ENCODE measurements at regions of chr5 and their contacts with region 1.

Region 1: GRCh38 chr5:38845526-38846378 is at the start of gene OSMR:
- DNase-seq: peak; percentile 84
- ATAC-seq: peak; percentile 89
- H3K4me3 ChIP-seq: peak within 1 kb of the TSS; percentile 98 to 99 (median 98)
- H3K27ac ChIP-seq: peak within 1 kb of the TSS; percentile 95
- H3K4me1 ChIP-seq: peaks cover 55% of the 10 kb centered on the region
- H3K27me3 ChIP-seq: no peaks in the 10 kb centered on the region; a peak in 1 of 5 replicates
- CTCF ChIP-seq: peak; percentile 5; the same call in 1 of the 2 replicates
- EP300 ChIP-seq: peak in 1 of 2 experiments; percentile 55; a peak in 2 of 4 replicates
- POLR2A ChIP-seq: peak; percentile 50 to 71
- RAD21 ChIP-seq: no peak
- total RNA-seq, gene OSMR: 14.2 and 21.3 TPM in 2 replicates

Region 2: DNA sequence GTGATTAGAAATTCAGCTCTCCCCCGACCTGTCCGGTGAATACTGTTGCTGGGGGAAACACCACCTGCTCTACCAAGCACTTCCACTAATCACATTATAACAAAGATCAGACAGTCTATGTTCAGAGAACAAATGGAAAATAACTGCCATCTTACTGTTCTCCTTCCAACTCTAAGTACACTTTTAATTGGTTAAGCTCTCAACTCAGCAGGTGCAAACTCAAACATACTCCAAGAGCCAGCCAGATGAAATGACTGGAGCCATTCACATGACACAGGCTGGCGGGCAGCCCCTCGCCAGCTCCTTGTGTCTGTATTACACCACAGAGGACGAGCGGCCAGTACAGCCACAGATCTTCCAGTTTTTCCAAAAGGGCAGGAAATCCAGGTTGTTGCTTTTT is 305.4 kb before region 1 on chr5:
- CTCF ChIA-PET with region 1: no interaction called
- POLR2A ChIA-PET with region 1: no interaction called
- in situ Hi-C with region 1: no loop called
- intact Hi-C with region 1: loop called (anchors 10 kb)
- DNase-seq: no peak
- ATAC-seq: no peak
- H3K4me3 ChIP-seq: no peak overlapping the region
- H3K27ac ChIP-seq: no peak overlapping the region
- H3K4me1 ChIP-seq: peaks cover 84% of the 10 kb centered on the region
- H3K27me3 ChIP-seq: no peaks in the 10 kb centered on the region
- CTCF ChIP-seq: no peak
- EP300 ChIP-seq: no peak
- POLR2A ChIP-seq: no peak
- RAD21 ChIP-seq: no peak

Region 3: GRCh38 chr5:38745836-38746732 is 99.7 kb before region 1 on chr5:
- CTCF ChIA-PET with region 1: no interaction called
- POLR2A ChIA-PET with region 1: no interaction called
- in situ Hi-C with region 1: no loop called
- intact Hi-C with region 1: no loop called
- DNase-seq: no peak
- ATAC-seq: no peak
- H3K4me3 ChIP-seq: no peak overlapping the region
- H3K27ac ChIP-seq: no peak overlapping the region
- H3K4me1 ChIP-seq: no peaks in the 10 kb centered on the region
- H3K27me3 ChIP-seq: peaks cover 0 to 24% of the 10 kb centered on the region in 2 experiments; a peak in 3 of 5 replicates
- CTCF ChIP-seq: no peak
- EP300 ChIP-seq: no peak
- POLR2A ChIP-seq: no peak
- RAD21 ChIP-seq: no peak

Region 4: DNA sequence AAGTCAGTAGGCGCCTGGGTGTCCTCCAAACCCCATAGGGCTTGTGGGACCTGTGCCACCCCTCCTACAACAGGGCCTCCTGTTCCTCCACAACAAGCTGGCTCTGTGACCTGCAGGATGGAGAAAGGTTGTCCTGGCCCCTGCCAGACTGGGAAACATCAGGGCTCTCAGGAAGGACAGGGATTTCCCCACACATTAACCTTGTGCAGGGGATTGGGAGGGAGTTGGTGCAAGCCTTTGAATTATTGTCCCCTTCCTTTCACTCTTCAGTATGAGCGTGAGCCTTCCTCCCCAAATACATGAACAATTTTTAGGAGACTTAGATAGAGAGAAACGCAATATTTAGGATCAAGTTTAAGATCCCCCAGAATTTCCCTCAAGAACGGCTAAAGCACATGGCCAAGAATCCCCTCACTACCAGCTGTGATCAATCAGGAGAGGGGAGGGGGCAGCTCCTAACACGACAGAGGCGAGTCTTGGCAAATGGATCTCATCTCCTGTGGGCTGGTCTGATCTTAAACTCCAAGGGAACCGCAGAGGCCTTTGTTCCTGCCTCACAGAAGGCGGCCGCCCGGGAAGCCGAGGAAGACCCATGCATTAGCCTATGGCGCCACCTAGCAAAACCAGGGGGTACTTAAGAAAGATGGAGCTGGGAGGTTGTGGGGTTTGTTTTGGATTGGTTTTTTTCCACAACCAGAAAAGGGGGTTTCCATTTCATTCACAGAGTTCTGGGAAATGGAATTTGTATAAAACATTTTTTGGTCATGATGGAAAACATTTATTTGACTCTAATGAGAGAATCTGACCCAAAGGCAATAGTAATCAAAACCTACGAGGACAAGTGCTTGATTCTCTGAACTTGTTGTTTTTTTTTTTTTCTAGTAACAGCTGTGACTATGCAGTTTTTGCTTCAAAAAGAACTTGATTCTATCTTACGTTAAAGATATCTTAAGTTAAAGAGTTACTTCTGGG is 36.1 kb before region 1 on chr5:
- CTCF ChIA-PET with region 1: no interaction called
- POLR2A ChIA-PET with region 1: no interaction called
- in situ Hi-C with region 1: no loop called
- intact Hi-C with region 1: no loop called
- DNase-seq: peak; percentile 68
- ATAC-seq: peak; percentile 98
- H3K4me3 ChIP-seq: no peak overlapping the region
- H3K27ac ChIP-seq: no peak overlapping the region
- H3K4me1 ChIP-seq: peaks cover 13% of the 10 kb centered on the region
- H3K27me3 ChIP-seq: no peaks in the 10 kb centered on the region
- CTCF ChIP-seq: peak; percentile 88
- EP300 ChIP-seq: no peak
- POLR2A ChIP-seq: no peak
- RAD21 ChIP-seq: peak; percentile 82

Region 5: GRCh38 chr5:38831909-38832308 is 13.8 kb before region 1 on chr5:
- CTCF ChIA-PET with region 1: no interaction called
- POLR2A ChIA-PET with region 1: interaction called, 13 read pairs
- in situ Hi-C with region 1: no loop called
- intact Hi-C with region 1: loop called (anchors 1 kb)
- DNase-seq: peak; percentile 14
- ATAC-seq: peak; percentile 7; the same call in 2 of the 3 replicates
- H3K4me3 ChIP-seq: no peak overlapping the region
- H3K27ac ChIP-seq: peak overlapping the region; percentile 30
- H3K4me1 ChIP-seq: peaks cover 39% of the 10 kb centered on the region
- H3K27me3 ChIP-seq: no peaks in the 10 kb centered on the region
- CTCF ChIP-seq: peak; percentile 47
- EP300 ChIP-seq: no peak
- POLR2A ChIP-seq: no peak
- RAD21 ChIP-seq: no peak

Region 6: GRCh38 chr5:38922199-38922598 is 76.4 kb after region 1 on chr5:
- CTCF ChIA-PET with region 1: no interaction called
- POLR2A ChIA-PET with region 1: interaction called, 3 read pairs
- in situ Hi-C with region 1: no loop called
- intact Hi-C with region 1: loop called (anchors 5 kb)
- DNase-seq: peak; percentile 29
- ATAC-seq: peak; percentile 92
- H3K4me3 ChIP-seq: no peak overlapping the region
- H3K27ac ChIP-seq: no peak overlapping the region
- H3K4me1 ChIP-seq: peaks cover 8% of the 10 kb centered on the region
- H3K27me3 ChIP-seq: no peaks in the 10 kb centered on the region
- CTCF ChIP-seq: peak; percentile 80
- EP300 ChIP-seq: no peak
- POLR2A ChIP-seq: no peak
- RAD21 ChIP-seq: peak; percentile 47; the same call in 1 of the 2 replicates

Region 7: DNA sequence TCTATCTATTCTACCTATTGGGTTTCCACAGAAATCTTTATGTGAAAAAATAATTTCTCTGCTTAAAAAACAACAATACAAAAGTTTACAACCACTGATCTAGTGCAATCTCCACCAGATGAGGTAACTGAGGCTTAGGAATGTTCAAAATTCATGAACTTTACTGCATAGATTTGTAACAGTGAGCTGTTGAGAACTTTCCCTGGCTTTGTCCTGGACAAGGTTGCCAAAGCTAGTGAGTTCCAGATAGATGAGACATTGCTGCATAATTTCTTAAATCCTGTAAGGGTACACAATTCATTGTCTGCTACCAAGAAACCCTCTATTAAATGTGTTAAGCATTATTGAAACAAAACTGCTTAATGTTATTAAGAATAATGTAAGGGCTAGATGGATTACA is 102.7 kb after region 1 on chr5:
- CTCF ChIA-PET with region 1: no interaction called
- POLR2A ChIA-PET with region 1: no interaction called
- in situ Hi-C with region 1: no loop called
- intact Hi-C with region 1: no loop called
- DNase-seq: no peak
- ATAC-seq: no peak
- H3K4me3 ChIP-seq: no peak overlapping the region
- H3K27ac ChIP-seq: no peak overlapping the region
- H3K4me1 ChIP-seq: no peaks in the 10 kb centered on the region
- H3K27me3 ChIP-seq: no peaks in the 10 kb centered on the region
- CTCF ChIP-seq: no peak
- EP300 ChIP-seq: no peak
- POLR2A ChIP-seq: no peak
- RAD21 ChIP-seq: no peak

Region 8: GRCh38 chr5:39005566-39006232 is 159.9 kb after region 1 on chr5:
- CTCF ChIA-PET with region 1: no interaction called
- POLR2A ChIA-PET with region 1: no interaction called
- in situ Hi-C with region 1: no loop called
- intact Hi-C with region 1: no loop called
- DNase-seq: peak; percentile 12
- ATAC-seq: peak; percentile 84
- H3K4me3 ChIP-seq: no peak overlapping the region
- H3K27ac ChIP-seq: no peak overlapping the region
- H3K4me1 ChIP-seq: no peaks in the 10 kb centered on the region
- H3K27me3 ChIP-seq: no peaks in the 10 kb centered on the region
- CTCF ChIP-seq: peak; percentile 47
- EP300 ChIP-seq: no peak
- POLR2A ChIP-seq: no peak
- RAD21 ChIP-seq: no peak

Region 9: GRCh38 chr5:39074016-39074886 is 228.5 kb after region 1 on chr5 and contains the start of gene RICTOR:
- CTCF ChIA-PET with region 1: no interaction called
- POLR2A ChIA-PET with region 1: no interaction called
- in situ Hi-C with region 1: loop called (anchors 10 kb)
- intact Hi-C with region 1: no loop called
- DNase-seq: peak; percentile 70
- ATAC-seq: peak; percentile 89
- H3K4me3 ChIP-seq: peak within 1 kb of the TSS; percentile 85 to 100 (median 99)
- H3K27ac ChIP-seq: peak within 1 kb of the TSS; percentile 98
- H3K4me1 ChIP-seq: peaks cover 28% of the 10 kb centered on the region
- H3K27me3 ChIP-seq: no peaks in the 10 kb centered on the region; a peak in 1 of 5 replicates
- CTCF ChIP-seq: peak; percentile 8; the same call in 1 of the 2 replicates
- EP300 ChIP-seq: no peak
- POLR2A ChIP-seq: peak; percentile 58 to 84
- RAD21 ChIP-seq: no peak
- total RNA-seq, gene RICTOR: 10.7 and 32.6 TPM in 2 replicates

Region 10: DNA sequence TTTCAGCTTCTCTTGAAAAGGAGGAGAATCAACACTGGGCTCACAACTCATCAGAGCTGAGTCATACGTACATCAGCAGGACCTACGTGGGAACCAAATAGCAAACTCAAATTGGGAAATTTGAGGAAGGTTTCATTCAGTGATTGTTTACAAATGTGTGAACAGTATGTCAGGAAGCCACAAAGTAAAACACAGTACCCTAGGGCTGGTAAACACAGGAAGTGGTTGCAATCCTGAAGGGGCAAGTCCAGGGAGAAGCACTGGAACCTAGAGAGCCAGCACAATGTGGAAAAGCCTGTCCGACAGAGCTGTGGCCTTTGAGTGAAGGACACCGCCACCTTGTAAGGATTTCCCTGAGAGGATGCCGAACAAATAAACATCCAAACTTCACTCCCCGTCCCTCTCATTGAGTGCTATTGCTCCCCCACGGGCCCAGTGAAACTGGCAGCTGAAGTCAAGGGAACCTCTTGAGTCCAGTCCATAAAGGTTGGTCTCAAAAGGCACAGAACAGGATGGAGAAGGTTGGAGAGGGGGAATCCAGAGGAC is 255.2 kb after region 1 on chr5:
- CTCF ChIA-PET with region 1: no interaction called
- POLR2A ChIA-PET with region 1: no interaction called
- in situ Hi-C with region 1: no loop called
- intact Hi-C with region 1: loop called (anchors 10 kb)
- DNase-seq: peak; percentile 89
- ATAC-seq: peak; percentile 88
- H3K4me3 ChIP-seq: peak overlapping the region in 2 of 3 experiments; percentile 18 to 37; a peak in 2 of 6 replicates
- H3K27ac ChIP-seq: peak overlapping the region; percentile 63
- H3K4me1 ChIP-seq: peaks cover 49% of the 10 kb centered on the region
- H3K27me3 ChIP-seq: no peaks in the 10 kb centered on the region
- CTCF ChIP-seq: no peak
- EP300 ChIP-seq: peak in 1 of 2 experiments; percentile 72; a peak in 2 of 4 replicates
- POLR2A ChIP-seq: no peak
- RAD21 ChIP-seq: no peak

Measured in HepG2 (cell line).